A549 (cell line): ENCODE measurements at regions of chr19 and their contacts with region 1.

Region 1: GRCh38 chr19:44723952-44724319 is 24.6 kb upstream of the BCL3 start:
- DNase-seq: peak; percentile 96
- ATAC-seq: peak; percentile 77 to 83
- H3K4me3 ChIP-seq: peak overlapping the region; percentile 38
- H3K27ac ChIP-seq: peak overlapping the region; percentile 97
- H3K4me1 ChIP-seq: peaks cover 87% of the 10 kb centered on the region
- CTCF ChIP-seq: peak; percentile 99
- EP300 ChIP-seq: no peak
- POLR2A ChIP-seq: peak; percentile 40; the same call in 1 of the 2 replicates
- RAD21 ChIP-seq: peak; percentile 100

Region 2: GRCh38 chr19:44587963-44588770 is 135.8 kb before region 1 on chr19:
- CTCF ChIA-PET with region 1: interaction called, 31 read pairs
- POLR2A ChIA-PET with region 1: interaction called, 8 read pairs
- DNase-seq: peak; percentile 84 to 85
- ATAC-seq: peak; percentile 85 to 96
- H3K4me3 ChIP-seq: peak overlapping the region; percentile 13; the same call in 1 of the 3 replicates
- H3K27ac ChIP-seq: peak overlapping the region; percentile 90 to 94
- H3K4me1 ChIP-seq: peaks cover 75% of the 10 kb centered on the region
- CTCF ChIP-seq: peak; percentile 83
- EP300 ChIP-seq: peak; percentile 71 to 81; a peak in 3 of 5 replicates
- POLR2A ChIP-seq: no peak
- RAD21 ChIP-seq: peak; percentile 71 to 93

Region 3: GRCh38 chr19:44653977-44654774 is 69.8 kb before region 1 on chr19:
- CTCF ChIA-PET with region 1: interaction called, 60 read pairs
- POLR2A ChIA-PET with region 1: no interaction called
- DNase-seq: peak; percentile 87 to 88
- ATAC-seq: peak; percentile 80 to 85
- H3K4me3 ChIP-seq: no peak overlapping the region
- H3K27ac ChIP-seq: peak overlapping the region; percentile 34 to 77; a peak in 5 of 6 replicates
- H3K4me1 ChIP-seq: peaks cover 31% of the 10 kb centered on the region
- CTCF ChIP-seq: peak; percentile 93
- EP300 ChIP-seq: no peak
- POLR2A ChIP-seq: no peak
- RAD21 ChIP-seq: peak; percentile 92 to 94

Region 4: DNA sequence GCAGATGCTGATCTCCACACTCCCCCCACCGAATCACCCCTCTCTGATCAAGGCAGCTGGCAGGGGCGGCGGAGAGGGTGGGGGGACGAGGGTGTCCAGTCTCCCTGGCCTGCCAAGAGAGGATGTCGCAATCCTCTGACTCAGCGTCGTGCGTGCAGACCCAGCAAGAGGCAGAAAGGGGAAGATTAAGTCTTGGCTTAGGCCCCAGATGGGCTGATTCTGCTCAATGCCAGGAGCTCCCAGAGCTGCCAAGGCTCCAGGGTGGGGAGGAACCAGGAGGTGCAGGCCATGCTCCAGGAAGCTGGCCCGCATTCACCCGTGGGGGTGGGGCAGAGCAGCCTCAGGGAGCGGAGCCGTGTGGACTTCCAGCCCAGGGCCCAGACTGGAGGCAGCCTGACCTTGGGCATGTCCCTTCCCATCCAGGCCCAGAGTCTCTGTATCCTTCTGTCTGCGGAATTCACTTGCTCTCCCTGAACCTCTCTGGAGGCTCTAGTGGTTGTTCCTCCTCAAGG is 18.0 kb after region 1 on chr19:
- CTCF ChIA-PET with region 1: interaction called, 241 read pairs
- POLR2A ChIA-PET with region 1: interaction called, 53 read pairs
- DNase-seq: peak; percentile 97 to 100
- ATAC-seq: peak; percentile 62 to 73
- H3K4me3 ChIP-seq: 0 out of 3 replicates have a peak overlapping the region, but pooled peaks have one; percentile 2
- H3K27ac ChIP-seq: peak overlapping the region; percentile 92 to 99
- H3K4me1 ChIP-seq: peaks cover 93% of the 10 kb centered on the region
- CTCF ChIP-seq: no peak
- EP300 ChIP-seq: peak; percentile 97 to 99
- POLR2A ChIP-seq: peak; percentile 39; the same call in 1 of the 2 replicates
- RAD21 ChIP-seq: peak; percentile 37 to 67

Region 5: GRCh38 chr19:44752816-44753618 is 29.1 kb after region 1 on chr19:
- CTCF ChIA-PET with region 1: interaction called, 1,899 read pairs
- POLR2A ChIA-PET with region 1: interaction called, 33 read pairs
- DNase-seq: peak; percentile 93 to 97
- ATAC-seq: peak; percentile 52 to 61
- H3K4me3 ChIP-seq: peak overlapping the region; percentile 95
- H3K27ac ChIP-seq: peak overlapping the region; percentile 92 to 99
- H3K4me1 ChIP-seq: peaks cover 83% of the 10 kb centered on the region
- CTCF ChIP-seq: no peak
- EP300 ChIP-seq: peak; percentile 78 to 92; a peak in 4 of 5 replicates
- POLR2A ChIP-seq: no peak
- RAD21 ChIP-seq: no peak; a peak in 2 of 5 replicates

Region 6: DNA sequence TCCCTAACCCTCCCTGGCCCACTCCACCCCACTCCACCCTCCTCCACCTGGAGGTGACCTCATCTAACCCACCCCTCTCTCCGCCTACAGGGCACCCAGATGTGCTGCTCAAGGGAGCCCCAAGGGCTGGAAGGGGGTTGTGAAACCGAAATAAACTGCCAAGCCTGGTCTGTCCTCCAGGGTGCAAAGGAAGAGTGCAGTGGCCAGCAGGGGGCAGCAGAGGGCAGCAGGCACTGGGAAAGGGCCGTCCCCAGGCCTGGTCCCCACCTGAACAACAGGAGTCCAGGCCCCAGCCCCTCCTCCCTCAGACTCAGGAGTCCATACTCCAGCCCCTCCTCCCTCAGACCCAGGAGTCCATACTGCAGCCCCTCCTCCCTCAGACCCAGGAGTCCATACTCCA is 76.5 kb after region 1 on chr19:
- CTCF ChIA-PET with region 1: interaction called, 1,899 read pairs
- POLR2A ChIA-PET with region 1: no interaction called
- DNase-seq: peak; percentile 89 to 97
- ATAC-seq: peak; percentile 95 to 98
- H3K4me3 ChIP-seq: no peak overlapping the region
- H3K27ac ChIP-seq: peak overlapping the region; percentile 62 to 79; a peak in 5 of 6 replicates
- H3K4me1 ChIP-seq: peaks cover 19% of the 10 kb centered on the region
- CTCF ChIP-seq: peak; percentile 92
- EP300 ChIP-seq: no peak
- POLR2A ChIP-seq: no peak
- RAD21 ChIP-seq: peak; percentile 81 to 86

Region 7: GRCh38 chr19:44845612-44846454 is 121.9 kb after region 1 on chr19 and contains the start of gene NECTIN2:
- CTCF ChIA-PET with region 1: interaction called, 71 read pairs
- POLR2A ChIA-PET with region 1: interaction called, 6 read pairs
- DNase-seq: peak; percentile 99 to 100
- ATAC-seq: peak; percentile 67 to 73
- H3K4me3 ChIP-seq: peak within 1 kb of the TSS; percentile 97
- H3K27ac ChIP-seq: peak within 1 kb of the TSS; percentile 94 to 95
- H3K4me1 ChIP-seq: peaks cover 37% of the 10 kb centered on the region
- CTCF ChIP-seq: peak; percentile 96
- EP300 ChIP-seq: no peak
- POLR2A ChIP-seq: peak; percentile 63
- RAD21 ChIP-seq: peak; percentile 73 to 75
- polyA plus RNA-seq, gene NECTIN2: 69.4 and 84.8 TPM in 2 replicates